Left lung (tissue), 14 donors: ENCODE measurements at regions of chr2 and their contacts with region 1.

Region 1: DNA sequence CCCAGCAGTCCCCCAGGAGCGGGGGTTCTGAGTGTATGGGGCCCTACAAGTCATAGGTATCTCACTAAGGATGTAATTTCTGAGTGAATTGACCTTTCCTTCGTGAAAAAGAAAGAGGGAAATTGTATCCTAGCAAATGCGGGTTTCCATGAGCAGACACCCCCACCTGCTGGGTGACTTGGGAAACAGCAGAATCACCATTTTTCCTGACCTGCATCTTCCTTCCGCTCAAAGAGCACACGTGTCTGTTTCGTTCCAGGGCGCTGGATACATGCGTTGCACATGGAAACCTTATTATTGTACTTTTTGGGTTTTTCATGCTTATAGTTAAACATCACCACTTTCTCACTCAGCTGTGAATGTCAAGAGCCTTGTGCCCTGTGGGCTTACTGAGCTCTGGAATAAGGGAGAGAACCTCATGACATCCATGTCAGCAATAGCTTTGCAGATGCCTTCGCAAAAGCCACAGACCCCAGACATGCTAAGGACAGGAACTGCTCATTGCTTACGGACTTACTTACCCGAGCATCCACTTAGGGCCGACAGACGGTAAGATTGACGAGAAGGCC is 132.8 kb downstream of the TPO start:
- DNase-seq: peak in 3 of 4 donors; percentile 22 to 60 (median 54)
- ATAC-seq: peak; percentile 68
- H3K4me3 ChIP-seq: no peak overlapping the region
- H3K27ac ChIP-seq: no peak overlapping the region
- H3K4me1 ChIP-seq: peaks cover 0 to 4% of the 10 kb centered on the region in 2 donors
- H3K27me3 ChIP-seq: peaks cover 0 to 12% of the 10 kb centered on the region in 2 donors
- CTCF ChIP-seq: peak; percentile 69 to 74

Region 2: GRCh38 chr2:950080-950966 is 595.8 kb before region 1 on chr2 and contains the start of gene SNTG2:
- intact Hi-C with region 1: loop called in 1 of 2 experiments (anchors 10 kb)
- DNase-seq: peak in 2 of 4 donors; percentile 37 to 82
- ATAC-seq: peak; percentile 97
- H3K4me3 ChIP-seq: peak within 1 kb of the TSS; percentile 33 to 44
- H3K27ac ChIP-seq: no peak within 1 kb of the TSS
- H3K4me1 ChIP-seq: peaks cover 8 to 16% of the 10 kb centered on the region in 2 donors
- H3K27me3 ChIP-seq: peaks cover 51 to 75% of the 10 kb centered on the region in 2 donors
- CTCF ChIP-seq: no peak
- polyA plus RNA-seq, gene SNTG2: 0.24 to 0.98 (median 0.64) TPM

Region 3: GRCh38 chr2:1698188-1698945 is 152.3 kb after region 1 on chr2:
- intact Hi-C with region 1: no loop called
- DNase-seq: peak in 2 of 4 donors; percentile 57 to 63
- ATAC-seq: peak; percentile 90
- H3K4me3 ChIP-seq: no peak overlapping the region
- H3K27ac ChIP-seq: peak overlapping the region in 1 of 2 donors; percentile 85
- H3K4me1 ChIP-seq: peaks cover 0 to 4% of the 10 kb centered on the region in 2 donors
- H3K27me3 ChIP-seq: no peaks in the 10 kb centered on the region
- CTCF ChIP-seq: no peak

Region 4: GRCh38 chr2:1923541-1923940 is 377.4 kb after region 1 on chr2:
- intact Hi-C with region 1: no loop called
- DNase-seq: peak in 2 of 4 donors; percentile 53 to 77
- ATAC-seq: no peak
- H3K4me3 ChIP-seq: no peak overlapping the region
- H3K27ac ChIP-seq: no peak overlapping the region
- H3K4me1 ChIP-seq: no peaks in the 10 kb centered on the region
- H3K27me3 ChIP-seq: no peaks in the 10 kb centered on the region
- CTCF ChIP-seq: no peak